ENCODE measurements at regions of chr21 and their contacts with region 1.

Region 1: DNA sequence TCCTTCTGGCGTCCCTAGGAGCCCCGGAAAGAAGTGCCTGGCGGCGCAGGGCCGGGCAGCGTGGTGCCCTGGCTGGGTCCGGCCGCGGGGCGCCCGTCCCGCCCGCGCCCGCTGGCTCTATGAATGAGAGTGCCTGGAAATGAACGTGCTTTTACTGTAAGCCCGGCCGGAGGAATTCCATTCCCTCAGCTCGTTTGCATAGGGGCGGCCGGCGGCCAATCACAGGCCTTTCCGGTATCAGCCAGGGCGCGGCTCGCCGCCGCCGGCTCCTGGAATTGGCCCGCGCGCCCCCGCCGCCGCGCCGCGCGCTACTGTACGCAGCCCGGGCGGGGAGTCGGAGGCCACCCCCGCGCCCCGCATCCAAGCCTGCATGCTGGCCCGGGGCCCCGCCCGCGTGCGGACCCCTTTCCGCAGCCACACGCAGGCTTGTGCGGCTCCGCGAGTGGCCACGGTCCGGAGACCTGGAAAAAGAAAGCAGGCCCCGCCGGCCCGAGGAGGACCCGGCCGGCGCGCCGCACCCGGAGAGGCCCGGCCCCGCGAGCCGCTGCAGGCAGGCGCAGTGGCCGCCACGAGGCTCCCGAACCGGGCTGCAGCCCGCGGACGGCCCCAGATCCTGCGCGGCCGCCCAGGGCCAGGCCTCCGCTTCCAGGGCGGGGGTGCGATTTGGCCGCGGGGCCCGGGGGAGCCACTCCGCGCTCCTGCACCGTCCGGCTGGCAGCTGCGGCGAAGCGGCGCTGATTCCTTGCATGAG is 160.4 kb downstream of the RUNX1 start:
- DNase-seq: peak; percentile 66 to 84
- ATAC-seq: peak; percentile 46 to 69 (median 50)
- H3K4me3 ChIP-seq: peak overlapping the region; percentile 77
- H3K4me3 Mint-ChIP-seq: peak overlapping the region; percentile 96
- H3K27ac ChIP-seq: peak overlapping the region; percentile 78
- H3K27ac Mint-ChIP-seq: peak overlapping the region; percentile 98
- H3K4me1 ChIP-seq: peaks cover 45% of the 10 kb centered on the region
- H3K4me1 Mint-ChIP-seq: peaks cover 23 to 35% of the 10 kb centered on the region in 2 donors
- H3K27me3 ChIP-seq: no peaks in the 10 kb centered on the region
- H3K27me3 Mint-ChIP-seq: no peaks in the 10 kb centered on the region
- CTCF ChIP-seq: no peak

Region 2: DNA sequence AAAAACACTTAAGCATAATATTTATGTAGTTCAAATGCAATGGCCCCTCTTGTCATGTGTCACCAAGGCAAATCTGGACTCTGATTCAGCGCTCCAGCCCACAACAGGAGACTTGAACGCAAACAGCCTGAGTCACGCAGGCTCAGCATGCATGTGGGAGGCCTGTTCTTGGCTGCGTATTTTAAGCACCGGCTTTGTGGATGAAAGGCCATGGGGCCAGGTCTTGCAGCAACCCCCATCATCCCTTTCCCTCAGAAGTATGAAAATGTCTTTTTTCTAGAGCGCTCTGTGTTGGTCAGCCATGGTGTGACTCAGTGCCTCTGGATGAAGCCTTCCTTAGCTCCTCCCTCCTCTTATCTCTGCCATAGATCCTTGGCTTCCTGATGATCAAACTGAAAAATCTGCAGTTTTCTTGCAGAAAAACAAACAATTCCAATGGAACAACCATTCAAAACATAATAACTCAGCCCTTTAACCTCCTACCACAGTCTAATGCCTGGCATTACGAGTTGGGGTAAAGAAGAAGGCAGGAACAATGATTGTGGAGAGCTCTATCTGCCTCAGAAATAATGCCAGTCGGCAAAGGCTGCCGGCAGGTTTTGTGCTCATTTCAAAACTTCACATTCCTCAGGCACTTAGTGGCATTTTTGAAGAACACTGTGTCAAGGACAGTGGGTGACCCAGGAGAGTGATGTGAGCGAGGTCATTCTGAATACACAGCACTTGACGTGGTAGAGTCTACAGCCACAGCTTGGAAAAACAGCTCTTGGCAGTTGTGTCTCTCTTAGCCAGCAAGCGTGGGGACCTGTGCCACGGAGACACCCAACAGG is 52.4 kb before region 1 on chr21:
- intact Hi-C with region 1: no loop called
- DNase-seq: peak in 1 of 2 donors; percentile 18
- ATAC-seq: peak in 1 of 3 donors; percentile 59
- H3K4me3 ChIP-seq: no peak overlapping the region
- H3K4me3 Mint-ChIP-seq: no peak overlapping the region
- H3K27ac ChIP-seq: no peak overlapping the region
- H3K27ac Mint-ChIP-seq: peak overlapping the region in 1 of 2 donors; percentile 15
- H3K4me1 ChIP-seq: peaks cover 28% of the 10 kb centered on the region
- H3K4me1 Mint-ChIP-seq: peaks cover 37 to 48% of the 10 kb centered on the region in 2 donors
- H3K27me3 ChIP-seq: no peaks in the 10 kb centered on the region
- H3K27me3 Mint-ChIP-seq: no peaks in the 10 kb centered on the region
- CTCF ChIP-seq: no peak

Region 3: GRCh38 chr21:34933609-34934335 is 45.0 kb after region 1 on chr21:
- intact Hi-C with region 1: loop called (anchors 2 kb)
- DNase-seq: peak in 1 of 2 donors; percentile 83
- ATAC-seq: peak; percentile 88 to 93 (median 91)
- H3K4me3 ChIP-seq: peak overlapping the region; percentile 11
- H3K4me3 Mint-ChIP-seq: peak overlapping the region; percentile 78
- H3K27ac ChIP-seq: peak overlapping the region; percentile 89
- H3K27ac Mint-ChIP-seq: peak overlapping the region; percentile 93
- H3K4me1 ChIP-seq: peaks cover 29% of the 10 kb centered on the region
- H3K4me1 Mint-ChIP-seq: peaks cover 62 to 80% of the 10 kb centered on the region in 2 donors
- H3K27me3 ChIP-seq: no peaks in the 10 kb centered on the region
- H3K27me3 Mint-ChIP-seq: no peaks in the 10 kb centered on the region
- CTCF ChIP-seq: no peak

Region 4: GRCh38 chr21:35026617-35027562 is 138.1 kb after region 1 on chr21:
- intact Hi-C with region 1: loop called (anchors 2 kb)
- DNase-seq: peak; percentile 78 to 95
- ATAC-seq: peak; percentile 81 to 91 (median 87)
- H3K4me3 ChIP-seq: peak overlapping the region; percentile 29
- H3K4me3 Mint-ChIP-seq: peak overlapping the region; percentile 89
- H3K27ac ChIP-seq: peak overlapping the region; percentile 85
- H3K27ac Mint-ChIP-seq: peak overlapping the region; percentile 97 to 98
- H3K4me1 ChIP-seq: peaks cover 70% of the 10 kb centered on the region
- H3K4me1 Mint-ChIP-seq: peaks cover 78 to 86% of the 10 kb centered on the region in 2 donors
- H3K27me3 ChIP-seq: no peaks in the 10 kb centered on the region
- H3K27me3 Mint-ChIP-seq: no peaks in the 10 kb centered on the region
- CTCF ChIP-seq: no peak

Region 5: DNA sequence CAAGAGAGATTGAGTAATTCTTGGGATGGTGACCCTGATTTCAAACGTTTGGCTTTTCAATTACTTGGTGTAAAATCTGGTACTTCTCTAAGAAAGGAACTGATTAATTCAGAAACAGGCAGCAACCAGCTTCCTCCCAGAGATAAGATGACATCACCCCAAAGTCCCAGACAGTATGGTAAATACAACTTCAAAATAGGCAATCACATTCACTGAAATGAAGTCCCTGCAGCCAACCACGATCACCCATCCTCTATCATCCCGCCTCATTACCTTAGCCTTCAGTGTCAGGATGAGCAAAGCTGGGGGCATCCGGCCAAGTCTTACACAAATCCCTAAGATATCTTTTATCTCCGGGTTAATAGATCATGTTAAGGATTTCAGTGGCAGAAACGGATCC is 186.8 kb after region 1 on chr21:
- intact Hi-C with region 1: no loop called
- DNase-seq: no peak
- ATAC-seq: no peak
- H3K4me3 ChIP-seq: no peak overlapping the region
- H3K4me3 Mint-ChIP-seq: no peak overlapping the region
- H3K27ac ChIP-seq: no peak overlapping the region
- H3K27ac Mint-ChIP-seq: no peak overlapping the region
- H3K4me1 ChIP-seq: no peaks in the 10 kb centered on the region
- H3K4me1 Mint-ChIP-seq: peaks cover 0 to 4% of the 10 kb centered on the region in 2 donors
- H3K27me3 ChIP-seq: no peaks in the 10 kb centered on the region
- H3K27me3 Mint-ChIP-seq: peaks cover 5 to 7% of the 10 kb centered on the region in 2 donors
- CTCF ChIP-seq: no peak

Region 6: GRCh38 chr21:35222541-35222941 is 333.8 kb after region 1 on chr21:
- intact Hi-C with region 1: loop called (anchors 5 kb)
- DNase-seq: peak in 1 of 2 donors; percentile 32
- ATAC-seq: peak; percentile 38 to 70 (median 63)
- H3K4me3 ChIP-seq: no peak overlapping the region
- H3K4me3 Mint-ChIP-seq: peak overlapping the region; percentile 26
- H3K27ac ChIP-seq: no peak overlapping the region
- H3K27ac Mint-ChIP-seq: peak overlapping the region; percentile 5 to 79
- H3K4me1 ChIP-seq: peaks cover 30% of the 10 kb centered on the region
- H3K4me1 Mint-ChIP-seq: peaks cover 31 to 54% of the 10 kb centered on the region in 2 donors
- H3K27me3 ChIP-seq: no peaks in the 10 kb centered on the region
- H3K27me3 Mint-ChIP-seq: peaks cover 0 to 4% of the 10 kb centered on the region in 2 donors
- CTCF ChIP-seq: no peak